PC-9 (cell line): ENCODE measurements at regions of chr15 and their contacts with region 1.

Region 1: GRCh38 chr15:33506781-33507296 is 196.1 kb downstream of the RYR3 start:
- DNase-seq: no peak
- H3K4me3 ChIP-seq: no peak overlapping the region
- H3K27ac ChIP-seq: no peak overlapping the region
- H3K4me1 ChIP-seq: no peaks in the 10 kb centered on the region
- H3K27me3 ChIP-seq: 0 out of 2 replicates have a peak, but pooled peaks cover 3% of the 10 kb centered on the region
- CTCF ChIP-seq: no peak

Region 2: DNA sequence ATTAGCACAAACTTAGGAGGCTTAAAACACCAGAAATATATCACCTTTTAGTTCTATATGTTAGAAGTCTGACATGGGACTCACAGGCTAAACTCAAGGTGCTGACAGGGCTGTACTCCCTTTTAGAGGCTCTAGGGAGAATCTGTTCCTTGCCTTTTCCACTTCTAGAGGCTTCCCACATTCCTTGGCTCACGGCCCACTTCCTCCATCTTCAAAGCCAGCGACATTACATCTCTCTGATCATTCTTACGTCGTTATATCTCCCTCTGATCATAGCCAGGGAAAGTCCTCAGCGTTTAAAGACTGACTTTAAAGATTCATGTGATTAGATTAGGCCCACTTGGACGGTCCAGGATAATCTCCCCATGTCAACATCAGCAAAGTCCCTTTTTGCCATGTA is 622.7 kb before region 1 on chr15:
- CTCF ChIA-PET with region 1: no interaction called
- POLR2A ChIA-PET with region 1: no interaction called
- intact Hi-C with region 1: no loop called
- DNase-seq: no peak
- H3K4me3 ChIP-seq: no peak overlapping the region
- H3K27ac ChIP-seq: no peak overlapping the region
- H3K4me1 ChIP-seq: no peaks in the 10 kb centered on the region
- H3K27me3 ChIP-seq: no peaks in the 10 kb centered on the region
- CTCF ChIP-seq: no peak

Region 3: GRCh38 chr15:33242669-33243191 is 264.1 kb before region 1 on chr15:
- CTCF ChIA-PET with region 1: interaction called, 12 read pairs
- POLR2A ChIA-PET with region 1: no interaction called
- intact Hi-C with region 1: no loop called
- DNase-seq: peak; percentile 8 to 34
- H3K4me3 ChIP-seq: no peak overlapping the region
- H3K27ac ChIP-seq: peak overlapping the region; percentile 75
- H3K4me1 ChIP-seq: peaks cover 43% of the 10 kb centered on the region
- H3K27me3 ChIP-seq: no peaks in the 10 kb centered on the region
- CTCF ChIP-seq: peak; percentile 63

Region 4: DNA sequence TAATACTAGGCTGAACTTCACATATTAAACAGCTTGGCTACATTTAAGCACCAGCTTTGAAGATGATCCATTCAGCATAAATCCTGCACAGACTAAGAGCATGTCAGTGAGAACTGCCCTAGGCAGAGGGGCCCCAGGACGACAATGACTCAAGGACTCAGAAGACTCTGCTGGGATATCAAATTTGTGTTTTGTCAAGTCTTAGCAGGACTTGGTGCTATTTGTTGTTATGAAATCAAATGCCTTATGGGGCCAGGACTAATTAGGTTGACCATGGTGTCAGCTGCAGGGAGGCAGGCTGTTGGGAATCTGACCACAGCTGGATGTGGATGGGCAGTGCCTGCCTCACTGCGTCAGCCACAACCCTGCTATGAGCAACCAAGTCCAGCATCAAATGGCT is 104.2 kb before region 1 on chr15:
- CTCF ChIA-PET with region 1: no interaction called
- POLR2A ChIA-PET with region 1: no interaction called
- intact Hi-C with region 1: no loop called
- DNase-seq: no peak
- H3K4me3 ChIP-seq: no peak overlapping the region
- H3K27ac ChIP-seq: no peak overlapping the region
- H3K4me1 ChIP-seq: no peaks in the 10 kb centered on the region
- H3K27me3 ChIP-seq: no peaks in the 10 kb centered on the region
- CTCF ChIP-seq: no peak